Cardiac septum (tissue), 1 donor: ENCODE measurements at regions of chr12 and their contacts with region 1.

Region 1: GRCh38 chr12:109428037-109428629 is 49.0 kb downstream of the KCTD10 start:
- DNase-seq: peak; percentile 88

Region 2: DNA sequence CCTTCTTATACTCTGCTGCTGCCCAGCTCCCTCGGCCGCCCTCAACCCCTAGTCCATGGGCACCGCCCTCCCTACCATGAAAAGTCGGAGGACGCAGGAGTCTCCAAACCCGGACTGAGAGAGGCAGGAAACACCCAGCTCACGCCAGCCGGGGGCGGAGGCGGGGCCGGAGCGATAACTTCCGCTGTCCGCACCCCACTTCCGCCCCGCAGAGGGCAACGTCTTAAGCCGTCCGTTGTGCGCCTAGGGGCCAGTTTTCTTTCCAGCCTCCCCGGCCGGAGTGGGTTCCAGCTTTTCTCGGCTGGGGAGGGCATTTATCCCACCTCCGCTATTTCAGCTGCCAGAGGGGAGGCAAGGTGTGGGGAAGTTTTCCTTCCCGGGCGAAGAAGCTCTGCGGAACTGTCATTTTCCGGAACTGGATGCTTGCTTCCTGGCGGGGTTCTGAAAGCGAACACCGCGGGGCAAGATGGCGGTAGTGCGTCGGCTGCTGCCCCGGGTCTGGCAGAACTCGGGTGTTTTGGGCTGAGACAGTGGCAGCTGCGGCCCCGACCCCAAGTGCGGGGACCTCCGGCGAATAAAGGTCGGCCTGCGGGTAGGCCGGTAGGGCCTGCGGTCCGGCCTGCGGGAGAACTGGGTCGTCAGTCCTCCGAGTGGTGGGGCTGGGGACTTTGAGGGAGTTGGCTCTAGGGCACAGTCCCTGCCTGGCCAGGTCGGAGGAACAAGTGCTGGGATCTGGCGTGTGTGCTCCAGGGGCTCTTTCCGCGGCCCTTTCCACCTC is 49.2 kb after region 1 on chr12 and contains the starts of genes KCTD10 and UBE3B:
- intact Hi-C with region 1: loop called (anchors 5 kb)
- DNase-seq: peak; percentile 95
- total RNA-seq, gene KCTD10: 42.3 TPM
- total RNA-seq, gene UBE3B: 47.1 TPM

Region 3: DNA sequence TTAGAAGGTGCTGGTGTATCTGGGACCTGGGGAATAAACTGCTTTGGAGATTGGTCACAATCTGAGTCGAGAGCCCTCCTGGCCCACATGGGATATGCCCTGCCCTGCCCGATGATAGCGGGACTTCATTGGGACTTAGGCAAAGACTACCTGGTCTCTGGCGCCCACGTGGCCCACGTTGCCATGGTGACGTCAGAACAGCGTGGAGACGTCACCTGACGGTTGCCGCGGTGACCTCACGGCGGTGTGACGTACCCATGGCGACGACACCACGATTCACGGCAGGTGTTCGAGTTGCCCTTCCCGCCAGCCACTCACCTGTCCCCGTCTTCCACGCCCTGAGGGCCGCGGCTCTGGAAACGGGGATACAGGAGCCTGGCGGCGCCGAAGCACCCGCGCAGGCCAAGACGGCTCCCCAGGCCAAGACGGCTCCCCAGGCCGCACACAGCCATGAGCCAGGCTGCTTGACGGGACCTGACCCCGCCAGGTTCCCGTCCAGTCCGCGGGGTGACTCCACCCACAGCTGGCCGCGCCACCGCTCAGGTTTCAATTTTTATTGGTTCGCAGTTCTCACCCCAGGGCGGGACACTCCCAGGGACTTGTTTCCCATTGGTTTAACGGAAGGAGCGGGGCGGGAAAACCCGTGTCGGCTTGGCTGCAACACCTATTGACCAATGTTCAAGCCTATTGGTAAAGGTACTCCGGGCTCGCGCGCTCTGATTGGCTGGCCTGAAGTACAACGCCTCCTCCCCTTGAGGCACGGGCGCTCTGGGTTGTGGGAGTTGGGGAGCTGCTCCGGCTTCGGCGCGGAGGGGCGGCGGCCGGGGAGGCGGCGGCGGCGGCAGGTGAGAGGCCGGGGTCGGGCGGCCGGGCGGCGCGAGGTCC is 145.1 kb after region 1 on chr12 and contains the starts of genes MMAB and MVK:
- intact Hi-C with region 1: loop called (anchors 5 kb)
- DNase-seq: peak; percentile 99
- total RNA-seq, gene MMAB: 41.3 TPM
- total RNA-seq, gene MVK: 12.4 TPM

Region 4: DNA sequence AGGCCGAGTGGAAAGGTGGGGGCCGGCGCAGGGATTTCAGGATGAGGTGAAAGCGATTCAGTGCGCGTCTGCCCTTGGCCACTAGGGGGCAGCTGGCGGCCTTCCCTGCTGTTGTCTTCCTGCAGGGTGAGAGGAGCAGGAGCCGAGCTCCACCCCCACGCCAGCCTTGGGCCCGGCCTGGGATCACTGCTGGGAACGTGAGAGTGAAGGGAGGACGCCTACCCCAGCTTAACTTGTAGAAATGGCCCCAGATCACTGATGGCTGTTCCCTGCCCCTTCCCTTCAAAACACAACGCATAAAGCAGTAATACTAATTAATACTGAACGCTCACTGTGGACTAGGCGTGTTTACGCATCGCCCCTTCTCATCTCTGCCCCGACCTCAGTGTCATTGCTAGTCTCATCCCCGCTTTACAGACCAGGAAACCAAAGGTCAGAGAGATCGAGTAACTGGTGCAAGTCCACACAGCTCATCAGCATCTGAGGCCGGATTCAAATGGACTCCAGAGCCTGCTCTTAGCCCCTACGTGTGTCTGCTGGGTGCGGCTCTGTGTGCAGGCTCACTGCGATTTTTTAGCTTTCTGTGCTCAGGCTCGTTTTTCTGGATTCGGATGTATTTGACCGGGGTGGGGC is 169.8 kb after region 1 on chr12:
- intact Hi-C with region 1: loop called (anchors 10 kb)
- DNase-seq: peak; percentile 94

Region 5: GRCh38 chr12:109775172-109775881 is 347.2 kb after region 1 on chr12:
- intact Hi-C with region 1: loop called (anchors 10 kb)
- DNase-seq: peak; percentile 87